H1 (cell line): ENCODE measurements at regions of chr14 and their contacts with region 1.

Region 1: DNA sequence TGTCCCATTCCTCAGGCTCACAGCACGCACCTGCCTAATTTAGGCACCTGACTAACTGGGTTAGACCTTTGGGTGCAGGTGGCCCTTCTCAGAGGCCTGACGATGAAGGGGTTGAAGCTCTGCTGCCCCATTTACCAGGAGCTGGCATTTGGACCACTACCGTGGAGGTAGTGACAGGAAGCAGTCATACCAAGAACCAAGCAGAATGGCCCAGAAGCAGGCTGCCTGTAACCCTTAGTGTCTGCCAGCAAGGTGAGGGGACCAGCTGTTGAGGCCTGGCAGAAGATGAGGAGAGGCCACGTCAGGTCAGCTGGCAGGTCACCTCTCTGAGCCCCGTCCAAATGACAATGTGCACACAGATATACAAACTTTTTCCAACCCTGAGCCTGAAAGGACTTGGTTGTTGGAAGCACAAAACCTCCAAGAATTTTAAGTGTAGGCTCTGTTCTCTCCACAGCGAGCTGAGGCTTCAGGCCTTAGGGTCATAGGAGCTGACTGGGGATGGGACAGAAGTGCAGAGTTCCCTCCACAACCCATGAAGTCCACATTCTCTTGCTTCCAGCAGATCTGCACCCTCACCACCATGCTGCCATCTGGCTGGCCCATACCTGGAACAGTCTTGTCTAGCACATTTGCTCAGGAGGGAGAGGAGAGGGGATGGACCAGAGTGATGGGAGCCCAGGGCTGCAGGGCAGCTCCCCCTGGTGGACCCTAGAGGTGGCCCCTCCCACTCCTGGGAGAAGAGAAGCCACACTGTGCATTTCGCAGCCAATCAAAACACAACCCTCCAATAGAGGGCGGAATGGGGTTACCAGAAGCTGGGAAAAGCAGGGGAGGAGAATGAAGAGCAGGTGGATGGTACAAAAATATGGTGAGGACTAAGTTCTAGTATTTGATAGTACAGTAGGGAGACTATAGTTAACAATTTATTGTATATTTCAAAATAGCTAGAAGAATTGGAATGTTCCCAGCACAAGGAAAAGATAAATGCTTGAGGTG is 23.3 kb downstream of the VASH1 start:
- DNase-seq: peak; percentile 58 to 91
- H3K4me3 ChIP-seq: no peak overlapping the region
- H3K27ac ChIP-seq: no peak overlapping the region
- H3K4me1 ChIP-seq: no peaks in the 10 kb centered on the region
- H3K27me3 ChIP-seq: no peaks in the 10 kb centered on the region
- CTCF ChIP-seq: peak; percentile 94 to 99 (median 98)
- EP300 ChIP-seq: no peak
- POLR2A ChIP-seq: no peak
- RAD21 ChIP-seq: peak; percentile 82 to 85

Region 2: GRCh38 chr14:76546426-76547221 is 237.9 kb before region 1 on chr14:
- CTCF ChIA-PET with region 1: no interaction called
- POLR2A ChIA-PET with region 1: no interaction called
- DNase-seq: peak in 1 of 2 experiments; percentile 87
- H3K4me3 ChIP-seq: no peak overlapping the region
- H3K27ac ChIP-seq: no peak overlapping the region
- H3K4me1 ChIP-seq: peaks cover 0 to 13% (median 3%) of the 10 kb centered on the region in 4 experiments; a peak in 5 of 7 replicates
- H3K27me3 ChIP-seq: no peaks in the 10 kb centered on the region
- CTCF ChIP-seq: peak; percentile 45 to 89 (median 74)
- EP300 ChIP-seq: no peak
- POLR2A ChIP-seq: no peak
- RAD21 ChIP-seq: peak; percentile 82 to 85

Region 3: DNA sequence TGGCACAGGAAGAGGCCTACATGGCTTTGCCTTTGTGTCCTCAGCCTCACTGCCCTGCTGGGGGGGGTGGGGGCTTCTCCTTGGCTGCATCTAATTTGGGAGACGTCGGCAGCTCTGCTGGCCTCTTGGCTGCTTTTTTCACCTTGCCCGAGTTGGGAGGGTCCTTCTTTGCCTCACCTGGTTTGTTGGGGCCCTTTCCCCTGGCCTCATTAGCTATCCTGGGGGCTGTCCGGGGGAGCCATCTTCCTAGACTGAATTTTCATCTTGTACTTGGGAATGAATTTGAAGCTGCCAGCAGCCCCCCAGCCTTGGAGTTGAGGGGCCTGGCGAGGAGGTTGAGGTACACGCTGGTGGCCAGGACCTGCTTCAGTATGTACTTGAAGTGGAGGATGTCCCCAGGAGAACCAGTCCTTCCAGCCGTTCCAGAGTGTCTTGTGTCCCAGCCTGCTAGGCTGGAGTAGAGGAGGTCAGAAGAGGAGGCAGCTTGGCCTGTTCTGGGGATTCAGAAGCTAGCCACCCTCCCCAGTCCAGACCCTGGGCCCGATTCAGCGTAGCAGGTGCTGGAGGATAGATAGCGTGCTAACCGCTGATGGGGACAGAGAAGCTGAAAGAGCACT is 94.0 kb before region 1 on chr14:
- CTCF ChIA-PET with region 1: interaction called, 15 read pairs
- POLR2A ChIA-PET with region 1: no interaction called
- DNase-seq: peak in 1 of 2 experiments; percentile 23
- H3K4me3 ChIP-seq: no peak overlapping the region
- H3K27ac ChIP-seq: no peak overlapping the region; the same call in 1 of the 2 replicates
- H3K4me1 ChIP-seq: no peaks in the 10 kb centered on the region
- H3K27me3 ChIP-seq: no peaks in the 10 kb centered on the region
- CTCF ChIP-seq: no peak
- EP300 ChIP-seq: no peak
- POLR2A ChIP-seq: no peak
- RAD21 ChIP-seq: no peak

Region 4: GRCh38 chr14:76710056-76711010 is 74.2 kb before region 1 on chr14:
- CTCF ChIA-PET with region 1: interaction called, 234 read pairs
- POLR2A ChIA-PET with region 1: no interaction called
- DNase-seq: peak in 1 of 2 experiments; percentile 46
- H3K4me3 ChIP-seq: no peak overlapping the region
- H3K27ac ChIP-seq: no peak overlapping the region
- H3K4me1 ChIP-seq: no peaks in the 10 kb centered on the region
- H3K27me3 ChIP-seq: no peaks in the 10 kb centered on the region
- CTCF ChIP-seq: peak; percentile 1 to 72 (median 60)
- EP300 ChIP-seq: no peak
- POLR2A ChIP-seq: no peak
- RAD21 ChIP-seq: peak; percentile 74 to 76

Region 5: GRCh38 chr14:76729953-76730505 is 54.5 kb before region 1 on chr14:
- CTCF ChIA-PET with region 1: interaction called, 30 read pairs
- POLR2A ChIA-PET with region 1: no interaction called
- DNase-seq: no peak
- H3K4me3 ChIP-seq: no peak overlapping the region
- H3K27ac ChIP-seq: no peak overlapping the region
- H3K4me1 ChIP-seq: peaks cover 0 to 5% (median 1%) of the 10 kb centered on the region in 4 experiments; a peak in 4 of 7 replicates
- H3K27me3 ChIP-seq: no peaks in the 10 kb centered on the region
- CTCF ChIP-seq: no peak
- EP300 ChIP-seq: no peak
- POLR2A ChIP-seq: no peak
- RAD21 ChIP-seq: no peak

Region 6: GRCh38 chr14:76767681-76768656 is 16.6 kb before region 1 on chr14:
- CTCF ChIA-PET with region 1: interaction called, 128 read pairs
- POLR2A ChIA-PET with region 1: interaction called, 20 read pairs
- DNase-seq: peak in 1 of 2 experiments; percentile 71
- H3K4me3 ChIP-seq: peak overlapping the region in 1 of 4 experiments; percentile 30; a peak in 3 of 8 replicates
- H3K27ac ChIP-seq: no peak overlapping the region
- H3K4me1 ChIP-seq: peaks cover 0 to 22% (median 19%) of the 10 kb centered on the region in 4 experiments; a peak in 5 of 7 replicates
- H3K27me3 ChIP-seq: peaks cover 4 to 15% (median 13%) of the 10 kb centered on the region in 4 experiments
- CTCF ChIP-seq: no peak
- EP300 ChIP-seq: no peak
- POLR2A ChIP-seq: no peak
- RAD21 ChIP-seq: no peak

Region 7: DNA sequence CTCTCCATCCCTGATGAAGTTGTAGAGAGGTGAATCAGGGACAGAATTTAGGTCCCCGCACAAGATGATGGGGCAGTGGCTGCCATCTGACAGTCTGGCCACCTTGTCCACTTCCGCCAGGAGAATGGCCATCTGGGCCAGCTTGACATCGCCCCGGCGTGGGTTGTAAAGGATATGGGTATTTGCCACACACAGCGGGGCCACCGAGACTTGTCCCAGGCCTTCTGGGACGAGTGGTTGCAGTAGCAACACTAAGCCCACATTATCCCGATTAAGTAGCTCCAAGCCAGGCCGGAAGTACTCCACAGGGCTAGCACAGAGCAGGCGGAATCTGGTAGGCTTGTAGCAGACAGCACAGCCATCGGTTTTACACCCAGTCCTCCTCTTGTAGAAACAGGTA is 21.9 kb after region 1 on chr14:
- CTCF ChIA-PET with region 1: interaction called, 52 read pairs
- POLR2A ChIA-PET with region 1: interaction called, 3 read pairs
- DNase-seq: no peak
- H3K4me3 ChIP-seq: no peak overlapping the region
- H3K27ac ChIP-seq: no peak overlapping the region
- H3K4me1 ChIP-seq: peaks cover 0 to 4% (median 1%) of the 10 kb centered on the region in 4 experiments; a peak in 3 of 7 replicates
- H3K27me3 ChIP-seq: no peaks in the 10 kb centered on the region
- CTCF ChIP-seq: no peak
- EP300 ChIP-seq: no peak
- POLR2A ChIP-seq: no peak
- RAD21 ChIP-seq: no peak